ENCODE measurements at regions of chr5 and their contacts with region 1.

Region 1: DNA sequence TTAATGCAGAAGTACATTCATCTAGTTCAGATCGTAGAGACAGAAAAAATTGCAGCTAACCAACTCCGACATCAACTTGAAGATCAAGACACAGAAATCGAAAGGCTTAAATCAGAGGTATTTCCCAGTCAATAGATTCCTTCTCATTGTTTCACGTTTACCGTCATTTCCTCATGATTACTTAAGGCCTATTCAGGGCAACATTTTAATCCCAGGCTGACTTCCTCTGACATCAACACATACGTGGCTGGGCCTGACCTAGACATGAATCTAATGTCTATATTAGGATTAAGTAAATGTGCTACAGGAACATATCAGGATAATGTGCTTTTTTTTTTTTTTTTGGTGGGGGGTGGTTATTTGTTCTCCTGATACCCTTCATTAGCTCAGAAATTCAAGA is 107.9 kb downstream of the RASGRF2 start:
- DNase-seq: peak in 1 of 2 donors; percentile 49
- ATAC-seq: peak in 7 of 8 donors; percentile 59 to 93 (median 87)
- H3K4me3 ChIP-seq: no peak overlapping the region
- H3K27ac ChIP-seq: peak overlapping the region in 9 of 10 donors; percentile 16 to 86 (median 71)
- H3K4me1 ChIP-seq: peaks cover 0 to 25% (median 0%) of the 10 kb centered on the region in 9 donors
- H3K27me3 ChIP-seq: no peaks in the 10 kb centered on the region
- CTCF ChIP-seq: no peak

Region 2: DNA sequence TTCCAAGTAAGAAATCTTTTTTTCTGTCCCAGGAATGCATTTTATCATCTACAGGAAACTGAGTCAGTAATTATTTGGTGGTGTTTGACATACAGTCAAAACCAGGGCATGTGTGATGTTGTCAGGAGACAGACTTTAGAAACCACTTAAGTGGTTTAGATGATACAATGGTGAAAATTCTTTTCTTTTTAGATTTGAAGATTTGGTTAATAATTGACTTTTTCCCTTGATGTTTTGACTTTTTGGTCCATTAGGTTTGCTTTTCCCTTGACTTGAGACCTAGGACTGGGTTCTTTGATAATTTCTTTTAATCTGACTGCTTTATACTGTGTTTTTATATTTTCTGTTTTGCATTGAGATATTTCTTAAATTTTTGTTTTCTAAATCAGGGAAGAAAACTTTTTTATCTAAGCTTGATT is 22.7 kb before region 1 on chr5:
- intact Hi-C with region 1: loop called in 1 of 10 experiments (anchors 1 kb)
- DNase-seq: no peak
- ATAC-seq: no peak
- H3K4me3 ChIP-seq: no peak overlapping the region
- H3K27ac ChIP-seq: no peak overlapping the region
- H3K4me1 ChIP-seq: peaks cover 0 to 4% (median 0%) of the 10 kb centered on the region in 9 donors
- H3K27me3 ChIP-seq: no peaks in the 10 kb centered on the region
- CTCF ChIP-seq: no peak